Transverse colon (tissue), 4 donors: ENCODE measurements at regions of chr18 and their contacts with region 1.

Region 1: GRCh38 chr18:5097116-5097703 is 99.8 kb downstream of the AKAIN1 start:
- DNase-seq: no peak
- H3K4me3 ChIP-seq: no peak overlapping the region
- H3K27ac ChIP-seq: no peak overlapping the region
- H3K4me1 ChIP-seq: no peaks in the 10 kb centered on the region
- H3K27me3 ChIP-seq: no peaks in the 10 kb centered on the region
- CTCF ChIP-seq: no peak
- EP300 ChIP-seq: no peak
- POLR2A ChIP-seq: no peak

Region 2: DNA sequence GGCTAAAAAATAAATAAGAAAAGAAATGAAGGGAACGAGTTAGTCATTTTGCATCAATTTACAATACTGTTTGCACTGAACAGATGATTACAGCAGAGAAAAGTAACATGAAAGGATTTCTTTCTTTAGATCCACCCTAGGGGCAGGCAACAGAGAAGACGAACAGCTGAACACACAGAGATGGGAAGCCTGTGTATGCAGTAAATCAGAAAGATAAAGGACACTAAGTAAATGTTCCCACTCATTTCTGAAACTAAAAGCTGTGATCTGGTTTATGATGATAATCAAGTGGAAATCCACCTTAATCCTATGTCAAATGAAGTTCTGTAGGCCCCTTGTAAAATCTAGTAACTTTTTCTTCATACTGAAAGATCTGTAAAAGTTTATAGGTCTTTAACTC is 45.6 kb after region 1 on chr18:
- in situ Hi-C with region 1: no loop called
- intact Hi-C with region 1: no loop called
- DNase-seq: no peak
- H3K4me3 ChIP-seq: no peak overlapping the region
- H3K27ac ChIP-seq: no peak overlapping the region
- H3K4me1 ChIP-seq: no peaks in the 10 kb centered on the region
- H3K27me3 ChIP-seq: no peaks in the 10 kb centered on the region
- CTCF ChIP-seq: no peak
- EP300 ChIP-seq: no peak
- POLR2A ChIP-seq: no peak

Region 3: GRCh38 chr18:5197032-5197434 is 99.8 kb after region 1 on chr18 and contains the start of gene AKAIN1:
- in situ Hi-C with region 1: loop called in 1 of 4 experiments (anchors 25 kb)
- intact Hi-C with region 1: no loop called
- DNase-seq: peak; percentile 9
- H3K4me3 ChIP-seq: no peak within 1 kb of the TSS
- H3K27ac ChIP-seq: no peak within 1 kb of the TSS
- H3K4me1 ChIP-seq: no peaks in the 10 kb centered on the region
- H3K27me3 ChIP-seq: peaks cover 63% of the 10 kb centered on the region
- CTCF ChIP-seq: no peak
- EP300 ChIP-seq: no peak
- POLR2A ChIP-seq: no peak
- total RNA-seq, gene AKAIN1: not detected